Ascending aorta (tissue), 2 donors: ENCODE measurements at regions of chr5 and their contacts with region 1.

Region 1: DNA sequence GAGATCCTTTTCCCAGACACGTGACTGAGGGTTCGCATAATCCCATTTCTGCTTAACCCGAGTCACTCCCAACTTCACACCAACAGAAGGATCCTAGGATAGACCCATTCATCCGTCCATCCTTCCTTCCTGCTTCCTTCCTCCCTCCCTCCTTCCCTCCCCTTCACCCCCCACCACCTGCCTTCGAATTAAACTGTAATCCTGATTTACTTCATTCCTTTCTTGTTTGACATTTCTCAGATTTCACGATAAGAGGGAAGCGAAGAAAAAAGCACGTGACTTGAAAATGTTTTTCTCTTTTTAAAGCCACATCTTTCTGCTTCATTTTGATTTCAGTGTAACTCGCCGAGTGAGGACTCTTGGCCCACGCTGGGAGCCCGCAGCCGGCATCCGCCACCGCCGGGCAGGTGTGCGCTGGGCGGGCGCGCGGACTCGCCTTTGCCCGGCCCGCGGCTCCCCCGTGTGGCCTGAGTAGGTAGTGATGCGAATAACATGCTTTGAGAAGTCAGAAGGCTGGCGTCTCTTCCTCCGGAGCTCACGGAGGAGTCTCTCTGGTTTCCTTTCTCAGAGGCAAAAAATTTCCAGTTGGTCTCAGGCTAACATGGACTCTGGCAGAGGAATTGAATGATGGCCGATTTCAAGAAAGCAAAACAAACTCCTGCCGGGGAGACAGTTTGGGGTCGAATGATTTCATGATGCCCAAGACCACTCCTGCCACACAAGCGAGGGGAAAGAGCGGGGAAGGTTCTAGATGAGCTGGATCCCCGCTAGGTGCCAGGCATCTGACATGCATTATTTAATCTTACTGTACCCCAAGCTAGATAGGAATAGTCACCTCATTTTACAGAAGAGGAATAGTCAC is 117.7 kb downstream of the SLC12A2 start:
- DNase-seq: peak in 1 of 2 donors; percentile 84
- H3K4me3 ChIP-seq: peak overlapping the region; percentile 11 to 16
- H3K27ac ChIP-seq: no peak overlapping the region
- H3K4me1 ChIP-seq: peaks cover 2 to 3% of the 10 kb centered on the region in 2 donors
- H3K27me3 ChIP-seq: peaks cover 3% of the 10 kb centered on the region
- CTCF ChIP-seq: peak; percentile 75 to 91 (median 82)

Region 2: DNA sequence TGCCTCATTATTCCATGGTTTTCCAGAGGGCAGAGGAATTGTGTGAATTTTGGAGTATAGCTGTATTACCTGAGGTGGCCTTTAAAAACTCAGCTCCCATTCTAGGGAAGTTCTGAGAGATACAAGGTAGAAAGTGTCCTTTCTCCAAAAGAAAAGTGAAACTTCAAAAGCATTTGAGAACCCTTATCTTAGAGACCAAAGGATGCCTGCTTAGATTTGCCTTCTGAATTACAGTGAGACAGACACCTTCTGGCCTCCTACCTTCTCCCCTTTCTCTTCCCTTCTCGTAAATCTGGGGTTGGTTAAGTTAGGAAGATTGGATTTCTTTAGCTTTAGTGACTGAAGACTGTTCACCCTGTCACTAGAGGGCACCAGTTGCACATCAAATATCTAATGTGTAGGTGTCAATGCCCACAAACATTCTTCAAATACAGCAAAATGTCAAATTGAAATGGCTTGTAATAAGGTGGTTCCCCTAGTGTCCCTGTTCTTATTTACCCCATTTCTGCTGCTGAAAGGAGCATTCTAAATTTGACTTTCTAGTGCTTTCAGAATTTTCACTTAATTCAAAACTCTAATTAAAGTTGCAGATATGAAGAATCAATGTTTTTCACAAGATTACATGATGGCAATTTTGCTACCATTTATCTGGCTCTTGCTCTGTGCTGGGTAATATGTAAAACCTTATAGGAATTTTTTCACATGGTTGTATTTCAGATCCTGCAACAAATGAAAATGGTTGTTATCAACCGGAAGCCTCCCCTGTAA is 637.1 kb before region 1 on chr5:
- intact Hi-C with region 1: loop called (anchors 1 kb)
- DNase-seq: no peak
- H3K4me3 ChIP-seq: no peak overlapping the region
- H3K27ac ChIP-seq: no peak overlapping the region
- H3K4me1 ChIP-seq: no peaks in the 10 kb centered on the region
- H3K27me3 ChIP-seq: no peaks in the 10 kb centered on the region
- CTCF ChIP-seq: peak; percentile 36 to 50 (median 46)

Region 3: DNA sequence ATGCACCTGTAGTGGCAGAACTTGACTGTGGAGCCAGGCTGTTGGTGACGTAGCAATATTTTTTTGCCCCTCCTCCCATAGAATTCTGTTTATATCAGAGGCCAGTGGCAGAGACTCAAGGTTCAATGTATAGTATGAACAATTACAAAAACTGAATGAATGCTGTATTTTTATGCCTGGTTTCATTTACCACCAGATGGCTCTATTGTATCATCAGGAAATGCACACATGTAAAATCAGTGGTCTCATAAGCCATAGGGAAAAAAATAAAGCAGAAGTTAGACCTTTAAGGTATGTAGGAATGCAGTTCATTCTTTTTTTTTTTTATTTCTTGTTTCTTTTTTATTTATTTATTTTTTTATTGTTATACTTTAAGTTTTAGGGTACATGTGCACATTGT is 454.5 kb before region 1 on chr5:
- intact Hi-C with region 1: loop called (anchors 1 kb)
- DNase-seq: no peak
- H3K4me3 ChIP-seq: no peak overlapping the region
- H3K27ac ChIP-seq: no peak overlapping the region
- H3K4me1 ChIP-seq: no peaks in the 10 kb centered on the region
- H3K27me3 ChIP-seq: no peaks in the 10 kb centered on the region
- CTCF ChIP-seq: peak in 1 of 3 experiments; percentile 50

Region 4: GRCh38 chr5:127875235-127876021 is 325.9 kb before region 1 on chr5:
- intact Hi-C with region 1: loop called (anchors 5 kb)
- DNase-seq: no peak
- H3K4me3 ChIP-seq: no peak overlapping the region
- H3K27ac ChIP-seq: no peak overlapping the region
- H3K4me1 ChIP-seq: peaks cover 0 to 11% of the 10 kb centered on the region in 2 donors
- H3K27me3 ChIP-seq: no peaks in the 10 kb centered on the region
- CTCF ChIP-seq: peak in 1 of 3 experiments; percentile 10

Region 5: DNA sequence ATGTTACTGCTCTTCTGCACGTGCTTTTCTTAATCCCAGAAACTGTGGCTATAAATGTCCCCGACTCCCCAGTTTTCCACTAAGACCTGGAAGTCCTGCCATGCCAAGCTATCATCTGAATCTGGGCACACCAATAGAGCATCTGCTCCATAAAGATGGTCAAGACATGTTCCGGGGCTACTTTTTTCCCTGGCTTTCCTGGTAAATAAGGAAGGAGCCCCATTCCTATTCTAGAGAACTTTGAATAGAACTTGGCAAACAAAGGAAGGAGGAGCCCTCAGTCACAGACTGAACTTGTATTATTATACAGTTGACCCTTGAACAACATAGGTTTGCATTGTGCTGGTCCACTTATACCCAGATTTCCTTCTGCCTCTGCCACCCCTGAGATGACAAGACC is 315.2 kb before region 1 on chr5:
- intact Hi-C with region 1: no loop called
- DNase-seq: no peak
- H3K4me3 ChIP-seq: no peak overlapping the region
- H3K27ac ChIP-seq: no peak overlapping the region
- H3K4me1 ChIP-seq: no peaks in the 10 kb centered on the region
- H3K27me3 ChIP-seq: no peaks in the 10 kb centered on the region
- CTCF ChIP-seq: no peak